ENCODE measurements at regions of chr12 and their contacts with region 1.

Region 1: GRCh38 chr12:85424581-85425348 is 144.7 kb downstream of the ALX1 start:
- DNase-seq: peak in 1 of 2 experiments; percentile 55
- H3K4me3 ChIP-seq: no peak overlapping the region
- H3K27ac ChIP-seq: no peak overlapping the region
- H3K4me1 ChIP-seq: no peaks in the 10 kb centered on the region
- H3K27me3 ChIP-seq: no peaks in the 10 kb centered on the region
- CTCF ChIP-seq: peak in 2 of 3 experiments; percentile 34 to 35; a peak in 2 of 4 replicates
- EP300 ChIP-seq: no peak
- POLR2A ChIP-seq: no peak
- RAD21 ChIP-seq: peak; percentile 61 to 63

Region 2: DNA sequence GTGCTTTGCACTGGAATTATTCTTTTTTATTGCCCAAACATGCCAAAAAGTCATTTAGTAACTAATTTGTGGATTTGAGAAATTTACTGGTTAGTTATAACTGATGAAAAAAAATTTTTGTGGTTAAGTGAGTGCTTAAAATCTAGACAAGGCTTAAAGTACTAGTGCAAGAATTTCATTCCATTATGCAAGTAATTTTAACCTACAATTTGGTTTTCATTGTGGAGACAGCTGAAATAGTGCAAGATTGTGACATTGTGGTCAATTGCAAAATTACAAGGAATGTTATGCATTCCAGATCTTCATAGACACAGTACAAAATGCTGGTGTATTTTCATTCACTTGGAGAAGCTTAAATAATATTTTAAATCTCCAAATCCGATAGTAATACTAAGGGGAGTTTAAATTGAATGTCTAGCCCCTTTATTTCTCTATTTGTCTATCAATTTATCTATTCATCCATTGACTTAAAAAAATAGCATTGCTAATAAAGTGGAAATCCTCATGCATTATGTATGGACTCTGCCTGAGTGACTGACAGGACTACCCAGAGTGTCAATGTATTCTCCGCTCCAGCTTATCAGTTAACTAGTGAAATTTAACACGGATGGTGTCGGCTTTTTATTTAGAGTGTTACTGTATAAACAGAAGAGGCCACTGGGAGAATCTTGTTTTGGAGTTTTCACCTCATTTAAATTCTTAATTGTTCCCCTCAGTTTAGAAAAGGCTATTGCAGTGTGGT is 18.8 kb before region 1 on chr12:
- CTCF ChIA-PET with region 1: interaction called, 16 read pairs
- POLR2A ChIA-PET with region 1: no interaction called
- DNase-seq: no peak
- H3K4me3 ChIP-seq: no peak overlapping the region
- H3K27ac ChIP-seq: no peak overlapping the region
- H3K4me1 ChIP-seq: no peaks in the 10 kb centered on the region
- H3K27me3 ChIP-seq: no peaks in the 10 kb centered on the region
- CTCF ChIP-seq: no peak
- EP300 ChIP-seq: no peak
- POLR2A ChIP-seq: no peak
- RAD21 ChIP-seq: no peak

Region 3: DNA sequence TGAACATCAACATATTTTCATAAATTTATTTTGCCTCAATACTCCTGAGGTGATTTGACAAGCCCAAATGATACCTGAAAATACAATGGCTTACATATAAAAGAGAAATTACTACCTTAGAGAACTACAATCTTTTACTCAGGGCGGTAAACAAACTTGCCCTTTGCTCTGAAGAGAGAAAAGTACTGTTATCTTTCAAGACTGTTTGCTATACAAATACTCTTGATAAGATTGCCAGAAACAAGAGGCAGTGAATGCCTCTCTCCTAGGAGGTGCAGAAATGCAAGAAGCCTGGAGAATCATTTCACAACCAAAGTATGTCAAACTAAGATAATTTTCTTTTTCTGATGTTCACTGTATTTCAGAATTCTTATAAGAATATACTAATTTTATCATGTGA is 15.5 kb after region 1 on chr12:
- CTCF ChIA-PET with region 1: interaction called, 18 read pairs
- POLR2A ChIA-PET with region 1: no interaction called
- DNase-seq: no peak
- H3K4me3 ChIP-seq: no peak overlapping the region
- H3K27ac ChIP-seq: no peak overlapping the region
- H3K4me1 ChIP-seq: no peaks in the 10 kb centered on the region
- H3K27me3 ChIP-seq: no peaks in the 10 kb centered on the region
- CTCF ChIP-seq: no peak
- EP300 ChIP-seq: no peak
- POLR2A ChIP-seq: no peak
- RAD21 ChIP-seq: no peak